A673 (cell line): ENCODE measurements at regions of chr11 and their contacts with region 1.

Region 1: DNA sequence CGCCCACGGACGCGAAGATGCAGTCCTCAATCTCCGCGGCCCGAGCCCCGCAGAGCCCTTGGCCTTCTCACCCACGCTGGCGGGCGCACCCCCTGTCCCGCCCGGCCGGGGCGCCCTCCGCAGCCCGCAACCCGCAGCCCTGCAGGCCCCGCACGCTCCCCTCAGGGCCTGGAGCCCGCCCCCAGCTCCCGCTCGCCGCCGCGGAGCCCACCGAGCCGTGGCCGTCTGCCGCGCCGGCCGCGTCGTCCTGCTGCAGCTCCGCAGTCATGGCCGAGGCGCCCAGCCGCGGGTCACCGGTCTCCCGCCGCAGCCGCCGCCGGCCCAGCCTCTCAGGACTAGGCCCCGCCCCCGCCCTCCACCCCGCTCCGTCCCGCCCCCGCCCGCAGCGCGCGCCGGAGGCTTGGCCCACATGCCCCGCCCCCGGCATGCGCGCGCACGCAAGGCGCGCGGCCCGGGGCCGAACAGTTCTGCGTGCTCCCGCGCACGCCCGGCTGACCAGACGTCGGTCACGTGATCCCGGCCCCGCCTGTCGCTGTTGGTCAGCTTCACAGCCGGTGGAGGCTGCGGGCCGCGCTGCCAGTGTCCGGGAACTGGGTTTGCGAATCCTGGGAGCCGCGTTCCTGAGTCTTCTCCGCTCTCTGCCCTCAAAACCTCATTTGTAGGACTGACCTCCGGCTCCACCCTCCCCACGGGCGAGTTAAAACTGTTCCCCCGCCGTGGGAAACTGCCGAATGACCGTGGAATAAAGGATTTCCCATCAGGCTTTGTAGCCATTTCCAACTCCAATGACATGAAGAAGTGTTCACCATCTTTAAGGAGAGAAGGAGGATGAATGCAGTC is at the start of gene USP28:
- DNase-seq: peak; percentile 95
- H3K4me3 ChIP-seq: peak within 1 kb of the TSS; percentile 91
- H3K27ac ChIP-seq: peak within 1 kb of the TSS; percentile 79
- H3K4me1 ChIP-seq: peaks cover 23% of the 10 kb centered on the region
- H3K27me3 ChIP-seq: no peaks in the 10 kb centered on the region
- CTCF ChIP-seq: 0 out of 2 replicates have a peak, but pooled peaks have one; percentile 12
- total RNA-seq, gene USP28: 23.7 and 37.6 TPM in 2 replicates

Region 2: GRCh38 chr11:112555491-112556364 is 1319.7 kb before region 1 on chr11:
- CTCF ChIA-PET with region 1: no interaction called
- POLR2A ChIA-PET with region 1: interaction called, 11 read pairs
- intact Hi-C with region 1: no loop called
- DNase-seq: peak; percentile 89
- H3K4me3 ChIP-seq: no peak overlapping the region
- H3K27ac ChIP-seq: no peak overlapping the region
- H3K4me1 ChIP-seq: peaks cover 22% of the 10 kb centered on the region
- H3K27me3 ChIP-seq: no peaks in the 10 kb centered on the region
- CTCF ChIP-seq: peak; percentile 97

Region 3: DNA sequence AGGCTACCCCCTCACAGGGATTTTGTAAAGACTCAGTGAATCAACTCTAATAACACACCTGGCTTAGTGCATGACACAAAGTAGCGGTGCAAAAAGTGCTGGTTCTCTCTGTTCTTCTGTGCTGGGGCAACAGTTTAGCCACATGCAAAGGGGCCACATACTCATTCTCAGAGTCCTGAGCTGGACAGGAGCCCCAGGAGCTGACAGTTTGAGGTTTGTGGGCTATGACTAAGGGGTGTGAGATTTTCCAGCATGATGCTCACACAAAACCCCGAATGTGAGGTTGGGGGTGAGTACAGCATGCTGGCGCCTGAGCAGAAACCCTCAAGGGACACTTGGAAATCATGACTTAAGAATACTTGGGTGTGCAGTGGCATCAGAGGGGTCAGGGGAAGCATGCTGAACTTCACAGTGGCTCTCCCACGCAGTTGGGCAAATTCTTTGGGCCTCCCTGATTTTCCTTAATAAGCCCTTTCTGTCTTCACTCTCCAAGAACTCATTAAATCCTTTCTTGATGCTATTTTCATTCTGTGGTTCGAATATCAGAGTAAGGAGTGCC is 200.4 kb before region 1 on chr11:
- CTCF ChIA-PET with region 1: no interaction called
- POLR2A ChIA-PET with region 1: no interaction called
- intact Hi-C with region 1: no loop called
- DNase-seq: no peak
- H3K4me3 ChIP-seq: no peak overlapping the region
- H3K27ac ChIP-seq: no peak overlapping the region
- H3K4me1 ChIP-seq: no peaks in the 10 kb centered on the region
- H3K27me3 ChIP-seq: no peaks in the 10 kb centered on the region
- CTCF ChIP-seq: no peak

Region 4: GRCh38 chr11:115144914-115145313 is 1269.5 kb after region 1 on chr11:
- CTCF ChIA-PET with region 1: interaction called, 12 read pairs
- POLR2A ChIA-PET with region 1: no interaction called
- intact Hi-C with region 1: no loop called
- DNase-seq: no peak
- H3K4me3 ChIP-seq: no peak overlapping the region
- H3K27ac ChIP-seq: no peak overlapping the region
- H3K4me1 ChIP-seq: no peaks in the 10 kb centered on the region
- H3K27me3 ChIP-seq: peaks cover 5% of the 10 kb centered on the region
- CTCF ChIP-seq: no peak